ENCODE measurements at regions of chr5 and their contacts with region 1.

Region 1: GRCh38 chr5:159106569-159107282 is 7.0 kb upstream of the EBF1 start:
- DNase-seq: peak; percentile 48
- H3K4me3 Mint-ChIP-seq: peak overlapping the region; percentile 72
- H3K27ac Mint-ChIP-seq: peak overlapping the region; percentile 38
- H3K4me1 Mint-ChIP-seq: peaks cover 14% of the 10 kb centered on the region
- H3K27me3 Mint-ChIP-seq: peaks cover 70% of the 10 kb centered on the region

Region 2: DNA sequence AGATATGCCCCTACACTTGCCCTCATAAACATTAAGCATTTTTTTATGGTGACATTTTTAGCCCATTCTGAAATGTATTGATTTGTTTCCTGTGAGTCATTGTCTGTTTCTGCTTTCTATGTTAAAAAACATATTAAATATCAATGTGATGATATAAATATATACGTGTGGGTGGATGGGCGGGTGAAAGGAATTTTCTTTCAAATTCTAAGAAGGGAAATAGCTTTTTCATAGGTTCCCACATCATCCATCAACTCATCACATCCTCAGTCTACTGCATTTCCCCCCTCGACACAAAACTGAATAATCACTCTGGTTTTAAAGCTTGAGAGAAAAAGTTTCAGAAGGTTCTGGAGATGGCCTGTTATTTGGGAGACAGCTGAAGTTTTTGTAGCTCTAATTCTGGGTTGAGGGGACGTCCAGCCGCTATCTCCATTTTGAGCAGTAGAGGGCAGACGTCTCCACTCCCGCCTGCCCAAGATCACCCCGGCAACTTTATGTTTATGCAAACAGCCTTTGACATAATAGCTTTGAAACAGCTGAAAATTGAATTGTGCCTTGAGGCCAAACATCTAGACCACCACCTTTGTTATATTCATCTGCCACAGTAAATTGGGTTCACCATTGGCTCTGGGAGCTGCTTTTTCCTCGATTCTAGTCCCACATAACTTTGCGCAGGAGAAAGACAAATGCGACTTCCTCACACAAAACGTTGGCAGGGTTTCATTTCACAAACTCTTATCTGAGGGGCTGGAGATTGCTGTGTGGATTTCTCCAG is 1031.5 kb before region 1 on chr5:
- intact Hi-C with region 1: loop called (anchors 10 kb)
- DNase-seq: peak; percentile 18
- H3K4me3 Mint-ChIP-seq: no peak overlapping the region
- H3K27ac Mint-ChIP-seq: no peak overlapping the region
- H3K4me1 Mint-ChIP-seq: peaks cover 5% of the 10 kb centered on the region
- H3K27me3 Mint-ChIP-seq: peaks cover 10% of the 10 kb centered on the region

Region 3: GRCh38 chr5:158174918-158175851 is 931.5 kb before region 1 on chr5:
- intact Hi-C with region 1: loop called (anchors 5 kb)
- DNase-seq: peak; percentile 15
- H3K4me3 Mint-ChIP-seq: no peak overlapping the region
- H3K27ac Mint-ChIP-seq: no peak overlapping the region
- H3K4me1 Mint-ChIP-seq: no peaks in the 10 kb centered on the region
- H3K27me3 Mint-ChIP-seq: no peaks in the 10 kb centered on the region

Region 4: GRCh38 chr5:158695595-158696330 is 411.0 kb before region 1 on chr5:
- intact Hi-C with region 1: loop called (anchors 1 kb)
- DNase-seq: peak; percentile 41
- H3K4me3 Mint-ChIP-seq: no peak overlapping the region
- H3K27ac Mint-ChIP-seq: no peak overlapping the region
- H3K4me1 Mint-ChIP-seq: peaks cover 2% of the 10 kb centered on the region
- H3K27me3 Mint-ChIP-seq: peaks cover 9% of the 10 kb centered on the region

Region 5: GRCh38 chr5:158988987-158989730 is 117.6 kb before region 1 on chr5:
- intact Hi-C with region 1: no loop called
- DNase-seq: no peak
- H3K4me3 Mint-ChIP-seq: no peak overlapping the region
- H3K27ac Mint-ChIP-seq: no peak overlapping the region
- H3K4me1 Mint-ChIP-seq: no peaks in the 10 kb centered on the region
- H3K27me3 Mint-ChIP-seq: no peaks in the 10 kb centered on the region

Region 6: GRCh38 chr5:159049844-159050315 is 56.8 kb before region 1 on chr5:
- intact Hi-C with region 1: loop called (anchors 2 kb)
- DNase-seq: no peak
- H3K4me3 Mint-ChIP-seq: no peak overlapping the region
- H3K27ac Mint-ChIP-seq: no peak overlapping the region
- H3K4me1 Mint-ChIP-seq: no peaks in the 10 kb centered on the region
- H3K27me3 Mint-ChIP-seq: peaks cover 75% of the 10 kb centered on the region

Region 7: DNA sequence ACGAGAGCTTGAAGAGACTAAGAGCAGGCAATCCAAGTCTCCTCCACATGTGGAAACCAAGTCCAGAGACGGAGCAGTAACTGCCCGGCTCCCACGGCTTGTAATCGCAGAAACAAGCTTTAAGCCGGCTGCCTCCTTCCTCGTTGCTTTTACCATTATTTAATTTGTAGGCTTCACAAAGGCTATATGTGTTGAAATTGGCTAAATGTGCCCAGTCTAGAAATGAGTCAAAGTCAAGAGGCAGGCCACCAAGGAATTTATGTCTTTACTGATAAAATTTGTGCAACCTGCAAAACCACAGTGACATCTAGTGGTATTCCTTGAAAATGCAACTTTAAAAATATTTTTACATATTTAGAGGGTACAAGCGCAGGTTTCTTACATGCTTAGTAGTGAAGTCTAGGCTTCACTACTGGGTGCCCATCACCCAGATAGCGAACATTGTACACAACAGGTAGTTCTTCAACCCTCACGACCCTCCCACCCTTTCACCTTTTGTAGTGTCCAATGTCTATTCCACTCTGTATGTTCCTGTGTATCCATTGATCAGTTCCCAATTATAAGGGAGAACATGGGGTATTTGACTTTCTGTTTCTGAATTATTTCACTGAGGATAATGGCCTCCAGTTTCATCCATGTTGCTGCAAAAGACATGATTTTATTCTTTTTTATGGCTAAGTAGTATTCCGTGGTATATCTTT is 26.5 kb after region 1 on chr5:
- intact Hi-C with region 1: no loop called
- DNase-seq: no peak
- H3K4me3 Mint-ChIP-seq: no peak overlapping the region
- H3K27ac Mint-ChIP-seq: no peak overlapping the region
- H3K4me1 Mint-ChIP-seq: peaks cover 4% of the 10 kb centered on the region
- H3K27me3 Mint-ChIP-seq: peaks cover 24% of the 10 kb centered on the region

Region 8: GRCh38 chr5:159386028-159386711 is 279.4 kb after region 1 on chr5:
- intact Hi-C with region 1: no loop called
- DNase-seq: no peak
- H3K4me3 Mint-ChIP-seq: no peak overlapping the region
- H3K27ac Mint-ChIP-seq: no peak overlapping the region
- H3K4me1 Mint-ChIP-seq: no peaks in the 10 kb centered on the region
- H3K27me3 Mint-ChIP-seq: peaks cover 14% of the 10 kb centered on the region